ENCODE measurements at regions of chr9 and their contacts with region 1.

Region 1: DNA sequence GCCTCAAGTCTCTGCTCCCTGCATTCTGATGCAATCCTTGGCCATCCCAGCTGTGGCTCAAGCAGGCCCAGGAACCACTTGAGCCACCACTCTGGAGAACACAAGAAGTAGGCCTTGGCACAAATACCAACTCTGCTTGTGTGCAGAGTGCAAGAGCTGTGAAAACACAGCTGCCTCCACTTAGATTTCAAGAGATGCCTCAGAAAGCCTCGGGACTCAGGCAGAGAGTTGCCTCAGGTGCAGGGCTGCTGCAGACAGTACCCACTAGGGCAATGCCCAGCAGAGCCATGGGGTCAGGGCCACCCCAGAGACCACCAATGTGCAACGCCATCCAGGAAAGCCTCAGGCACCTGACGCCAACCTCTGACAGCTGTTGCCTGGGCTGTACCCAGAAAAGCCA is 82.4 kb downstream of the FREM1 start:
- DNase-seq: no peak
- H3K4me3 ChIP-seq: no peak overlapping the region
- H3K27ac ChIP-seq: no peak overlapping the region; a peak in 1 of 4 replicates
- H3K4me1 ChIP-seq: no peaks in the 10 kb centered on the region; a peak in 1 of 4 replicates
- H3K27me3 ChIP-seq: no peaks in the 10 kb centered on the region
- CTCF ChIP-seq: no peak
- EP300 ChIP-seq: no peak
- RAD21 ChIP-seq: no peak

Region 2: DNA sequence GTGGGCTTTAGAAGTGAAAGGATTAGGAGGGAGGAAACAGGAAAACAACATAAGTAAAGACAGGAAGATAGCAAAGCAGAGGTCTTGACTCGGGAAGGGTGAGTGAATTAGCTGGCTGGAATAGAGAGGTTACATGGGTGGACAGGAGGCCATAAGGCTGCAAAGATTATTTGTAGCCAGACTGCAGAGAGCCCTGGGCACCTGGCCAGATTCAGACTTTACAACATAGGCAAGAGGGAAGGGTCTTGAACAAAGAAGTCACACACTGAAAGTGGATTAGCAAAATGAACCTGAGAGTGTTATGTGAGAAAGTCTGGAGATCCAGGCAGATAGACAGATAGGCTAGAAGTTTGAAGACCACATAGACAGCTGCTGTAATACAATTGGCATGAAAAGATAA is 75.5 kb before region 1 on chr9:
- CTCF ChIA-PET with region 1: no interaction called
- POLR2A ChIA-PET with region 1: no interaction called
- DNase-seq: no peak
- H3K4me3 ChIP-seq: no peak overlapping the region
- H3K27ac ChIP-seq: peak overlapping the region in 1 of 2 experiments; percentile 58; a peak in 2 of 4 replicates
- H3K4me1 ChIP-seq: peaks cover 0 to 9% of the 10 kb centered on the region in 2 experiments; a peak in 2 of 4 replicates
- H3K27me3 ChIP-seq: no peaks in the 10 kb centered on the region; the same call in 1 of the 2 replicates
- CTCF ChIP-seq: no peak
- EP300 ChIP-seq: no peak
- RAD21 ChIP-seq: no peak

Region 3: GRCh38 chr9:14846871-14847311 is 19.1 kb after region 1 on chr9:
- CTCF ChIA-PET with region 1: interaction called, 10 read pairs
- POLR2A ChIA-PET with region 1: no interaction called
- DNase-seq: peak; percentile 75
- H3K4me3 ChIP-seq: no peak overlapping the region; a peak in 1 of 4 replicates
- H3K27ac ChIP-seq: peak overlapping the region in 1 of 2 experiments; percentile 64; a peak in 1 of 4 replicates
- H3K4me1 ChIP-seq: peaks cover 0 to 9% of the 10 kb centered on the region in 2 experiments; a peak in 1 of 4 replicates
- H3K27me3 ChIP-seq: 0 out of 2 replicates have a peak, but pooled peaks cover 8% of the 10 kb centered on the region
- CTCF ChIP-seq: peak; percentile 80
- EP300 ChIP-seq: peak in 1 of 2 experiments; percentile 59; a peak in 2 of 4 replicates
- RAD21 ChIP-seq: peak; percentile 55